H1 (cell line): ENCODE measurements at regions of chr1 and their contacts with region 1.

Region 1: GRCh38 chr1:1959840-1960479 is 40.9 kb upstream of the TMEM52 start:
- DNase-seq: peak; percentile 80 to 97
- H3K4me3 ChIP-seq: peak overlapping the region in 2 of 4 experiments; percentile 13 to 52; a peak in 3 of 8 replicates
- H3K27ac ChIP-seq: no peak overlapping the region
- H3K4me1 ChIP-seq: peaks cover 0 to 12% (median 10%) of the 10 kb centered on the region in 4 experiments; a peak in 6 of 7 replicates
- H3K27me3 ChIP-seq: no peaks in the 10 kb centered on the region; a peak in 1 of 7 replicates
- CTCF ChIP-seq: peak; percentile 89 to 98 (median 96)
- EP300 ChIP-seq: no peak; a peak in 1 of 3 replicates
- POLR2A ChIP-seq: no peak
- RAD21 ChIP-seq: peak; percentile 78 to 86

Region 2: DNA sequence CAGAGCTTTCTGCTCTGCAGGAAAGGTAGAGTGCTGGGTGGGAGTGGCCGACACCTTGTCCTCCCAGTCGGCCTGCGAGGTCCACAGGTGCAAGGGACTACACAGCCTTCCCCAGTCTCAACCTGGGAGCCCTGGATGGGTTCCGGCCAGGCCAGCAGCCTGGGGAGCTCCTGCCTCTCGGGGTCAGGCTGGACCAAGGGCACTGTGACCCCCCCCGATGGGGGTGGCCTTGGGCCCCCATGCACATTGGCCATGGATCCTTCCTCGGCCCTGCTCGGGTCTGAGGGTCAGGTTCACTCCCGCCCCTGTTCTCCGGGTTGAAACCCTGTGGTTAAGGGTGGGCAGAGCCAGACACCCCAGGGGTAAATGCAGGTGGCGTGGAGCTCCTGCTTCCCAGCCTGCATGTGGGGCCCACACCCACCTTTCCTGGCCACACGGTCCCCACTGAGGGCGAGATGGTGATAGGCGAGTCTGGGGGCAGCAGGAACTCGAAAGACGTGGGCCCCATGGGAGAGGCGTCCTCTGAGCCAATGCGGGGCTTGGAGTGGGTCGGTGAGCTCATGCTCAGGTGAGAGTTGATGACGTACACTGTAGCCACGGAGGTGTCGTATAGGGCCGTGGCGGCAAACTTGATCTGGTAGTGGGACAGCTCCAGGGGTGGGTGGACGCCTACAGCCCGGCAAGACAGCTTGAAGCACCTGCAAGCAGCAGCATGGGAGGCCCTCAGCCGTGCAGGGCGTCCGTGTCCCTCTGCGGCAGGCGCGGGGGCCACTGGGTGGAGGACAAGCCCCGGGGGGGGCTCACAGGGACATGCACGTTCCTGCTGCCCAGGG is 30.1 kb before region 1 on chr1:
- CTCF ChIA-PET with region 1: interaction called, 13 read pairs
- POLR2A ChIA-PET with region 1: no interaction called
- DNase-seq: no peak
- H3K4me3 ChIP-seq: no peak overlapping the region
- H3K27ac ChIP-seq: no peak overlapping the region
- H3K4me1 ChIP-seq: no peaks in the 10 kb centered on the region
- H3K27me3 ChIP-seq: no peaks in the 10 kb centered on the region; a peak in 1 of 7 replicates
- CTCF ChIP-seq: no peak
- EP300 ChIP-seq: no peak
- POLR2A ChIP-seq: no peak
- RAD21 ChIP-seq: no peak

Region 3: DNA sequence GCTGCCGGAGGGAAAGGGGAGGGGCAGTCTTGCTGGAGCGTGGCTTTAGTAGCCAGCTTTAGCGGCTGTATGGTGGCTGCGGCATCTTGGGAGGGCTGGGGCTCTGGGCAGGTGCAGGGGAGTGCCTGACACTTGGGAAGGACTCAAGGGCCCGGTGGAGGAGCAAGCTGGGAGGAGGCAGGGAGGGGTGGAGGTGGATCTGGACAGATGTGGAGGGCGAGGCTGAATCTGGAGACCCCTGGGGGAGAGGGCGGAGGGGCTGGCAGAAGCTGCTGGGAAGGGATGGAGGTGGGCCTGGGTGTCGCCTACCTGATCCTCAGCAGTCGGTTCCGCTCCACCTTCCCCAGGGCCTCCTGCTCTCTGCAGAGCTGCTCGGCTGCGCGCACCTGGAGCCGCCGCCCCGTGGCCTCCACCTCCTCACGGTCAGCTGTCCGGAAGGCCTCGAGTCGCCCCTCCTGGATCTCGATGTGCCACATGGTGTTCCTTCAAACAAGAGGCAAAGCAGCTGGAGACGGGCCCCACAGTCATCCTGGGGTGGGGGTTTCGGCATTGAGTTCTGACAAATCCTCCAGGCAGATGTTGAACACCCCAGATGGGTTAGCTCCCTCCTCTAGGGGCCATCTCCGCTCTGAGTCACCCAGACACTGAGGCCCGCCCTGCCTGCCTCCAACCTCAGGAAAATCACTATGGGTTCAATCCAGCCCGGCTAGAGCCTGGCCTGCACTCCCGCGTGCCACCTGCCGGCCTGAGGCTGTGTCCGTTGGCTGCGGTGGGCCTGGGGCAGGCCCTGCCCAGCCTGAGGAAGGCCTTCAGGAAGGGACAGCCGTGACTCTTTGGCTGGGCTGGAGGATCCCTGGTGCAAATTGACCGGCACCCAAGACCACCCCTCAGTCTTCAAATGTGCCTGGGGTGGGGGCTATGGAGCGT is 14.0 kb after region 1 on chr1:
- CTCF ChIA-PET with region 1: interaction called, 19 read pairs
- POLR2A ChIA-PET with region 1: no interaction called
- DNase-seq: no peak
- H3K4me3 ChIP-seq: no peak overlapping the region
- H3K27ac ChIP-seq: no peak overlapping the region
- H3K4me1 ChIP-seq: no peaks in the 10 kb centered on the region
- H3K27me3 ChIP-seq: no peaks in the 10 kb centered on the region
- CTCF ChIP-seq: no peak
- EP300 ChIP-seq: no peak
- POLR2A ChIP-seq: no peak
- RAD21 ChIP-seq: no peak

Region 4: GRCh38 chr1:1989102-1989542 is 29.2 kb after region 1 on chr1:
- CTCF ChIA-PET with region 1: interaction called, 21 read pairs
- POLR2A ChIA-PET with region 1: no interaction called
- DNase-seq: no peak
- H3K4me3 ChIP-seq: no peak overlapping the region
- H3K27ac ChIP-seq: no peak overlapping the region
- H3K4me1 ChIP-seq: peaks cover 0 to 3% (median 0%) of the 10 kb centered on the region in 4 experiments; a peak in 2 of 7 replicates
- H3K27me3 ChIP-seq: no peaks in the 10 kb centered on the region
- CTCF ChIP-seq: no peak
- EP300 ChIP-seq: no peak
- POLR2A ChIP-seq: no peak
- RAD21 ChIP-seq: no peak

Region 5: DNA sequence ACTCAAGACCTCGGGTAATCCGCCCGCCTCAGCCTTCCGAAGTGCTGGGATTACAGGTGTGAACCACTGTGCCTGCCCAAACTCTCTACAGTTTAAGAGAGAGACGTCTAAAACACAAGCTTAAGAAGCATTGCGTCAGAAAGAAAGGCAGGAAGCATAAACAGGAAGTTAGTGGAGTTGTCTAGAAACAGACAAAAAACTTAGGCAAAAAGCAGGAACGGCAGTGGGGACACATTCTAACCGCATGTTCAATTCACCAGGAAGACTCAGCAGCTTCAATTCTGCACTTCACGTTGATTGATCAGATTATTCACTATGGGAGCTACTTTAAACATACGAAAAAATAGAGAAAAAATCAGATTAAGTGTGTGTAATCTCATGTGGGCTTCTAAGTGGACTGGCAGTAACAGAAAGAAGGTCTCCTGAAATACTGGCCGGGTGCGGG is 36.3 kb after region 1 on chr1:
- CTCF ChIA-PET with region 1: interaction called, 16 read pairs
- POLR2A ChIA-PET with region 1: no interaction called
- DNase-seq: no peak
- H3K4me3 ChIP-seq: no peak overlapping the region
- H3K27ac ChIP-seq: no peak overlapping the region
- H3K4me1 ChIP-seq: no peaks in the 10 kb centered on the region
- H3K27me3 ChIP-seq: no peaks in the 10 kb centered on the region
- CTCF ChIP-seq: no peak
- EP300 ChIP-seq: no peak
- POLR2A ChIP-seq: no peak
- RAD21 ChIP-seq: no peak

Region 6: DNA sequence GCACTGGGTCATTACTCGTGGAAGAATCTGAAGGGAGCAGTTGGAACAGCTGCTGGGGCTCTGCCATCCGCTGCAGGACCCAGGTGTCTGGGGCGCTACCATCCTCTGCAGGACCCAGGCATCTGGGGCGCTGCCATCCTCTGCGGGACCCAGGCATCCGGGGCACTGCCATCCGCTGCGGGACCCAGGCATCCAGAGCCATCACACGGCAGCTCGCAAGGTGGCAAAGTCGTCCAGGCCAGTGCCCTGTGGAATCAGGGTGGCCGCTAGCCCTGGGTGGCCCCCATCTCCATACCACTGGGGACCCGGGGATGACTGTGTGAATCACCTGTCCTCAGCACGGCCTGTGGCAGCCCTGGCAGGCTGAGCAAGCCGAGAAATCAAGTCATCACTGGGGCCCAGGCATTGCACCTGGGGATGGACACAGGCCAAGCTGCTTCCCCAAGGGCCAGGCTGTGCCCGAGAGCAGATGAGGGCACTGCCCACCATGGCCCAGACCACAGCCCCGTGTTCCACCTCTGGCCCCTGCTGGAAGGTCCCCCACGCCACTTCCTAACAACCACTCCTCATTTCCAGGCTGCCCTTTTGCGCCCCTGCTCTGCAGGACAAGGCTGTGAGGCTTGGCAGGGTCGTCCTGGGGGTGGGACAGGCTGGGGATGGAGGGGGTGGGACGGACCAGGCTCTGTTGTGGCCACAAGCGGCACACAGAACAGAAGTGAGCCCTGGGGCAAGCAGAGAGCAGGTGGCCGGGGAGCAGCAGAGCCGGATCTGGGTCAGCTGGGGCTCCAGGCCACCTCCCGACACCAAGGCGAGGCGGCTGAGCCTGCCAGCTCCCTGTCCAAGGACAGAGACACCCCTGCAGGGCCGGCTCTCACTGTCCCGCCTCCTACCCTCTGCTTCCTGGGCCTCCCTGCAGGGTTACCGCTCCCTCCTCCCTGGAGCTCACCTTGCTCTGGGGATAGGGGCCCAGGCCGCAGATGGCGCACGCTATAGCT is 71.9 kb after region 1 on chr1:
- CTCF ChIA-PET with region 1: interaction called, 10 read pairs
- POLR2A ChIA-PET with region 1: interaction called, 3 read pairs
- DNase-seq: no peak
- H3K4me3 ChIP-seq: no peak overlapping the region
- H3K27ac ChIP-seq: no peak overlapping the region
- H3K4me1 ChIP-seq: peaks cover 0 to 10% (median 4%) of the 10 kb centered on the region in 4 experiments; a peak in 3 of 7 replicates
- H3K27me3 ChIP-seq: no peaks in the 10 kb centered on the region
- CTCF ChIP-seq: no peak
- EP300 ChIP-seq: no peak
- POLR2A ChIP-seq: no peak
- RAD21 ChIP-seq: no peak

Region 7: DNA sequence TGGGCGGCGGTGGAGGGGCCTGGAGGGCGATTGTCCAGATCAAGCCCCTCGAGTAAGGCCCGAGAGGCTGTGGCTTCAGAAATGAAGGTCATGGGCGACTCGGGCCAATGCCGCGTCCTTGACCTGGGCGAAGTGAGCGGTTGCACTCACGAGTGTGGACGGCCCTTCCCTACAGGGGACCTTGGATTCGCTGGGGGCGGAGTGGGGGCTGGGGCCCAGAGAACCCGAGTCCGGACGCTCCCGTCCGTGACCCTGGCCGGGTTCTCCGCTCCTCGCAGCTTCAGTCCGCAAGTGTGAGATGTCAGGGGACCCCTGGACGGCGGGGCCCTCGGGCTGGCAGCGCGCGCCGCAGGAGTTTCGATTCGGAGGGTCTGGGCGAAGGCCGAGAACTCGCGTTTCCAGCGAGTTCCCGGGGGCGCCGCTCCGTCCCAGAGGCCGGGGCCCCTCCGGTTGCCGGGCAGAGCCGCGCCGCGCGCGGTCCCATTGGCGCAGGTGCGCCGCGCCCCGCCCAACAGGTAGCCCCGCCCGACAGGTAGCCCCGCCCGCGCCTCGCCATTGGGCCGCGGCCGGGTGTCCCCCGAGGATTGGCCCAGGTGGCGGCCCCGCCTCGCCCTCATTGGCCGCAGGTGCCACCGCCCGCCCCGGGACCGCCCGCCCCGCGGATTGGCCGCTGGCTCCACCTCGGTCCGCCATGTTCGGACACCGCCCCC is 89.9 kb after region 1 on chr1 and contains the start of gene PRKCZ:
- CTCF ChIA-PET with region 1: interaction called, 249 read pairs
- POLR2A ChIA-PET with region 1: interaction called, 4 read pairs
- DNase-seq: peak; percentile 71 to 97
- H3K4me3 ChIP-seq: peak within 1 kb of the TSS; percentile 79 to 83 (median 80)
- H3K27ac ChIP-seq: peak within 1 kb of the TSS; percentile 76
- H3K4me1 ChIP-seq: peaks cover 0 to 28% (median 20%) of the 10 kb centered on the region in 4 experiments; a peak in 6 of 7 replicates
- H3K27me3 ChIP-seq: peaks cover 0 to 3% (median 0%) of the 10 kb centered on the region in 4 experiments; a peak in 2 of 7 replicates
- CTCF ChIP-seq: no peak
- EP300 ChIP-seq: no peak
- POLR2A ChIP-seq: peak in 1 of 2 experiments; percentile 66; a peak in 1 of 3 replicates
- RAD21 ChIP-seq: no peak
- total RNA-seq, gene PRKCZ: 45.1 and 49.4 TPM in 2 replicates